HEK293T (cell line): ENCODE measurements at regions of chr16 and their contacts with region 1.

Region 1: DNA sequence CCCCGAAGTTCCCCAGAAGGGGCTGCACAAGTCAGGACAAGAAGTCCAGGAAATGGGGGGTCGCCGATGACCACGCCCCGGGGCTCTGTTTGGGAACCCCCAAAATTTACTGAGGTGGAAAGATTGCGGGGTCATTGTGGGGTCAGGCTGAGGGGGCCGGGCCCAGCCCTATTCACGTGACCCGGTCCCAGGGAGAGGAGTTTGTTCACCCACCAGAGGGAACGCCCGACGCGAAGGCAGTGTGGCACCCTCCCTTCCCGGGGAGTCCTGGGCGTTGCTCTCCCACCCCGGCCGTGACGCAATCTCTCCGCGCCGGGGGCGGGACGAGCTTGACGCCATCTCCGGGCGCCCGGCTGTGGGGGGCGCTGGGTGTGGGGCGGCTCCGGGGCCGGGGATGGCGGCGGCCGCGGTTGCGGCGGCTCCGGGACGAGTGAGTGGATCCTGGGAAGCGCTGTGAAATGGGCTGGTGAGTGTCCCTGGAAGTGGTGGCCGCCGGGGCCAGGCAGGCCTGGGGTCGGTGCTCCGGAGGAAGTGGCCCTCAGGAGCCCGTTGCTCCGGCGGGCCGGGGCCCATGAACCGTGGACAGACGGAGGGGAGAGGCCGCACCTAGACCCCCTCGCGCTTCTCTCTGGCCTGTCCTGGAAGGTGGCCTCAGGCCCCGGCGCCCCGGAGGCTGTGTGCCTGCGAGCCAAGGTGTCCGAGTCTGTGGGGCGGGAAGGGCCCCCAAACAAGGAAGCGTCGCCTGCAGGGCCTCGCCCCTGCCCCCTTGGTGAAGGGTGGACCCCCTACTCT is at the start of gene ATXN1L:
- DNase-seq: peak; percentile 98

Region 2: DNA sequence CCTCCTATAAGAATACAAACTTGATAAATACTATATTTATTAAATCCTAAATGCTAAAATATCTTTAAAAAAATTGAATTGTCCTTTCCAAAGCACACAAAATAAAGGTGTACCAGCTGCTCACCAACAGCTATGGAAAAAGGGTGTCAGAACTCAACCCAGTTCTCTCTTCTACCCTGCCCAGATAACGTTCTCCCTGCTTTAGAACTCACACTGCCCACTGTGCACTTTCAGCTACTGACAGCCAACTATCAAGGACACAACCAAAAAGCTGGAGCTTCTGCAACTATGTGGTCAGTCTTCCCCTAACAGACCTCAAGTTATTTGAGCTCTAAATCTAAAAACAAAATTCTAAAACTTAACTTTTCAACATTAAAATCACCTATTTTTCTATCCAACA is 50.9 kb before region 1 on chr16:
- CTCF ChIA-PET with region 1: no interaction called
- POLR2A ChIA-PET with region 1: no interaction called
- DNase-seq: no peak

Region 3: GRCh38 chr16:71859762-71860521 is 14.1 kb after region 1 on chr16:
- CTCF ChIA-PET with region 1: no interaction called
- POLR2A ChIA-PET with region 1: interaction called, 12 read pairs
- DNase-seq: no peak

Region 4: DNA sequence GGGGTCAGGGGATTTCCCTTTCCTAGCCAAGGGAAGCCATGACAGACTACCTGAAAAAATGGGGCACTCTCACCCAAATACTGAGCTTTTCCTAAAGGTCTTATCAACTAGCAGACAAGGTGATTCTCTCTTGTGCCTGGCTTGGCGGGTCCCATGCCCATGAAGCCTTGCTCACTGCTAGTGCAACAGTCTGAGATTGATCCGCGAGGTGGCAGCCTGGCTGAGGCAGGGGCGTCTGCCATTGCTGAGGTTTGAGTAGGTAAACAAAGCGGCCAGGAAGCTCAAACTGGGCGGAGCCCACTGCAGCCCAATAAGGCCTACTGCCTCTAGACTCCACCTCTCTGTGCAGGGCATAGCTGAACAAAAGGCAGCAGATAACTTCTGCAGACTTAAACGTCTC is 478.7 kb after region 1 on chr16:
- CTCF ChIA-PET with region 1: no interaction called
- POLR2A ChIA-PET with region 1: no interaction called
- DNase-seq: no peak